ENCODE measurements at regions of chrX and their contacts with region 1.

Region 1: GRCh38 chrX:136711147-136711546 is 63.2 kb downstream of the CD40LG start:
- DNase-seq: peak; percentile 33
- ATAC-seq: peak; percentile 20
- H3K4me3 Mint-ChIP-seq: no peak overlapping the region
- H3K27ac Mint-ChIP-seq: peak overlapping the region; percentile 92
- H3K4me1 Mint-ChIP-seq: peaks cover 74% of the 10 kb centered on the region
- H3K27me3 Mint-ChIP-seq: no peaks in the 10 kb centered on the region

Region 2: DNA sequence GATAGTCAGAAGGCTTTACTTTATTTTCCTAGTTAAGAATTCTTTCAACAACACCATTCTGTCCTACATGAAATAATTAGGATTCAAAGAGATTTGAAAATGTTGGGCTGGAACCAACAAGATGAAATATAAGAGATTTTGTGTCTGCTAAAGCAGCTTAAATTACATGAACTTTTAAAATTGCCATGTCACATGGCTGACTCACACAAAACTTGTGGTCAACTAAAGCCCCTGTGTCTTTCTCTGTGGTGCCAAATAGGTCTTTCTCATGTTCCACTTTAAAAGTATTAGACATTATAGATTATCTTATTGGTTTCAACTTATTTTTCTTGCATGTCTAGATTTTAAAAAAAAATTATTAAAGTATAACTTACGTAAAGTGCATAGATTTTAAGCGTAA is 624.6 kb before region 1 on chrX:
- CTCF ChIA-PET with region 1: no interaction called
- POLR2A ChIA-PET with region 1: no interaction called
- intact Hi-C with region 1: no loop called
- DNase-seq: no peak
- ATAC-seq: no peak
- H3K4me3 Mint-ChIP-seq: no peak overlapping the region
- H3K27ac Mint-ChIP-seq: no peak overlapping the region
- H3K4me1 Mint-ChIP-seq: no peaks in the 10 kb centered on the region
- H3K27me3 Mint-ChIP-seq: no peaks in the 10 kb centered on the region

Region 3: GRCh38 chrX:136626237-136626636 is 84.9 kb before region 1 on chrX:
- CTCF ChIA-PET with region 1: no interaction called
- POLR2A ChIA-PET with region 1: no interaction called
- intact Hi-C with region 1: no loop called
- DNase-seq: no peak
- ATAC-seq: peak; percentile 20
- H3K4me3 Mint-ChIP-seq: no peak overlapping the region
- H3K27ac Mint-ChIP-seq: peak overlapping the region; percentile 93
- H3K4me1 Mint-ChIP-seq: peaks cover 92% of the 10 kb centered on the region
- H3K27me3 Mint-ChIP-seq: no peaks in the 10 kb centered on the region

Region 4: DNA sequence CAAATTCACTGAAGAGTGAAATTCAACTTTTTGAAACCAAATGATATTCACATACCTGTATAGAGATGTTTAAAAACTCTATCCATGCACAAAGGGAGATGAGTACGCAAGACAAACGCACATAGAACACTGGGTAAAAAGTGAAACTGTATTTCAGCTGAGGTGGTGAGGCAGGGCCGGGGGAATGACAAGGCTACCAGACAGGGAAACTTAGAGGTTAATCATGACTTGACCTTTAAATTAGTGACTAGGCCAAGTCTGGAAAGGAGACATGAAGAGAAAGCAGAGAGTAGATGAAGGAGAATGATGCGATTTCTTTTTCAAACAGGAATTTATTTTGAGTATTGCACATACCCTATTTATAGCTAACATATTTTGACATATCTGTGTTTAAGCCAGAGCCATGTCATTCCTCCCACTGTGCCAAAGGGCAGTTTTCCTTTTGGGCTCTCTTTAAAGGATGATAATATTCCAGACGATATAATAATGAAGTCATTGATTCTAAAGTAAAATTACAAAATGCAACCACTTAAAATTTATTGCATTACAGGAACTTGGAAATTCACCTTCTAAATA is 20.1 kb after region 1 on chrX:
- CTCF ChIA-PET with region 1: interaction called, 4 read pairs
- POLR2A ChIA-PET with region 1: no interaction called
- intact Hi-C with region 1: loop called in 1 of 2 experiments (anchors 2 kb)
- DNase-seq: peak; percentile 49
- ATAC-seq: peak; percentile 76
- H3K4me3 Mint-ChIP-seq: peak overlapping the region; percentile 36
- H3K27ac Mint-ChIP-seq: peak overlapping the region; percentile 81
- H3K4me1 Mint-ChIP-seq: peaks cover 64% of the 10 kb centered on the region
- H3K27me3 Mint-ChIP-seq: no peaks in the 10 kb centered on the region

Region 5: DNA sequence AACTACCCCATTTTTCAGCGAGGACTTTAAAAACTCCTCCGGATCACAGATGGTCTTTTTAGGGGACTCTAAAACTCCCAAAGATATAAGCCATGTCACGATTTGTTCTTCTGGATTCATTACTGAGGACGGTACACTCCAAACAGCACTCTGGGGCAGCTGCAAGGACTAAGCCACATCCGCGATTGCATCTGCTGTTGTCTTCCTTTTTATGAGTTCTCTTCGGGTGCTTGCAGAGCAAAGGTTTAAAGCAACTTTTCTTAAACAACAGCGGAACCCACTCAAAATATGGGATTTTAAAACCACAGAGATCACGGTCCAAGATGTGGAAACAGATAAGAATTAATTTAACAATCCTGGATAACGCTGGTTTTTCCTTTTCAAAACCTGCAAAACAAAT is 69.6 kb after region 1 on chrX and contains the start of gene ARHGEF6:
- CTCF ChIA-PET with region 1: interaction called, 3 read pairs
- POLR2A ChIA-PET with region 1: interaction called, 3 read pairs
- intact Hi-C with region 1: loop called (anchors 2 kb)
- DNase-seq: peak; percentile 55
- ATAC-seq: peak; percentile 57
- H3K4me3 Mint-ChIP-seq: peak within 1 kb of the TSS; percentile 89
- H3K27ac Mint-ChIP-seq: peak within 1 kb of the TSS; percentile 99
- H3K4me1 Mint-ChIP-seq: peaks cover 60% of the 10 kb centered on the region
- H3K27me3 Mint-ChIP-seq: no peaks in the 10 kb centered on the region
- total RNA-seq, gene ARHGEF6: 44.5 to 53.6 TPM

Region 6: GRCh38 chrX:136866337-136867095 is 155.4 kb after region 1 on chrX:
- CTCF ChIA-PET with region 1: interaction called, 3 read pairs
- POLR2A ChIA-PET with region 1: no interaction called
- intact Hi-C with region 1: loop called (anchors 5 kb)
- DNase-seq: no peak
- ATAC-seq: no peak
- H3K4me3 Mint-ChIP-seq: peak overlapping the region; percentile 31
- H3K27ac Mint-ChIP-seq: peak overlapping the region; percentile 23
- H3K4me1 Mint-ChIP-seq: peaks cover 46% of the 10 kb centered on the region
- H3K27me3 Mint-ChIP-seq: no peaks in the 10 kb centered on the region

Region 7: GRCh38 chrX:136920001-136920400 is 208.9 kb after region 1 on chrX:
- CTCF ChIA-PET with region 1: interaction called, 5 read pairs
- POLR2A ChIA-PET with region 1: no interaction called
- intact Hi-C with region 1: loop called (anchors 2 kb)
- DNase-seq: no peak
- ATAC-seq: no peak
- H3K4me3 Mint-ChIP-seq: no peak overlapping the region
- H3K27ac Mint-ChIP-seq: no peak overlapping the region
- H3K4me1 Mint-ChIP-seq: peaks cover 2% of the 10 kb centered on the region
- H3K27me3 Mint-ChIP-seq: no peaks in the 10 kb centered on the region

Measured in activated CD4-positive, alpha-beta T cell treated with anti-CD3 and anti-CD28 coated beads for 36 hours (primary cell).